ENCODE measurements at regions of chr2 and their contacts with region 1.

Region 1: DNA sequence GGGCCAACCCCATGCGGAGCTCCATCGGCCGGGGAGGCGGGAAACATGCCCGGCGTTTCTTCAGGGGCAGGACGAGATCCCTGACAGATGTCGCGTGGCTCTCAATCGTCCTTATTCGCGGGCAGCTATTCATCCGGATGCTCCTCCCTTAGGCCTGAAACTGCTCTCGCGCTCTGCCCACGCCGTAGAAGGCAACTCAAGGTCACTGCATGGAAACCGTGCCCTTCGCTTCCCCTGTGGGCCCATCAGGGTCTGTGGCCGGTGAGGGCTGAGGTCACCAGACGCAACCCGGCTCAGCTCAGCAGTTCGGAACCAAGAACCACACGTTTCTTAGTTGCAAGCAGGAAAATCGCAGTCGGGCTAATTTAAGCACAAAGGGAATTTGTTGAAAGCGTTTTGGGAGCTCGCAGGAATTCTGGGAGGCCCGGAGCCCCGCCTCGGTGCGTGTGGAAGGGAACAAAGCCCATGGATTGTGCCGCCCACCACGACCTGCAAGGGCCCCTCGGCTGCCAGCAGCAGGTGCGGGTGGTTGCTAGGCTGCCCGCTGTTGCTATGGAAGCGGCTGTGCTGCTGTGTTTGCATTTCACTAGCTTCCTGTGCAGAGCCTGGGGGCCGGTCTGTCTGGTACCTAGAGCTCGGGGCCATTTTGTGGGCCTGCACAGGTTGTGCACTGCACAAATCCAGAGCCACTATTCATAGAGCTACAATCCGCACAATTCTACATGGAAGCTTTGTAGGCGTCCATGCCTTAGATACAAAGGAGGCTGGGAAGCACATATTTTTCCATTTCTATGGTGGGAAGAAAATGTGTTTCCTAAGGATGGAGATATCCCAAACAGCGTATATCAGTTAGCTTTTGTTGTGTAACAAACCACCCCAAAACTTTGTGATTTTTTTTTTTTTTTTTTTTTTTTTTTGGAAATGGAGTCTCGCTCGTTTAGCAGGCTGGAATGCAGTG is 6.0 kb upstream of the ALLC start:
- DNase-seq: peak; percentile 56
- H3K4me3 Mint-ChIP-seq: peak overlapping the region; percentile 90
- H3K27ac Mint-ChIP-seq: peak overlapping the region; percentile 96
- H3K4me1 Mint-ChIP-seq: peaks cover 18% of the 10 kb centered on the region
- H3K27me3 Mint-ChIP-seq: peaks cover 2% of the 10 kb centered on the region

Region 2: DNA sequence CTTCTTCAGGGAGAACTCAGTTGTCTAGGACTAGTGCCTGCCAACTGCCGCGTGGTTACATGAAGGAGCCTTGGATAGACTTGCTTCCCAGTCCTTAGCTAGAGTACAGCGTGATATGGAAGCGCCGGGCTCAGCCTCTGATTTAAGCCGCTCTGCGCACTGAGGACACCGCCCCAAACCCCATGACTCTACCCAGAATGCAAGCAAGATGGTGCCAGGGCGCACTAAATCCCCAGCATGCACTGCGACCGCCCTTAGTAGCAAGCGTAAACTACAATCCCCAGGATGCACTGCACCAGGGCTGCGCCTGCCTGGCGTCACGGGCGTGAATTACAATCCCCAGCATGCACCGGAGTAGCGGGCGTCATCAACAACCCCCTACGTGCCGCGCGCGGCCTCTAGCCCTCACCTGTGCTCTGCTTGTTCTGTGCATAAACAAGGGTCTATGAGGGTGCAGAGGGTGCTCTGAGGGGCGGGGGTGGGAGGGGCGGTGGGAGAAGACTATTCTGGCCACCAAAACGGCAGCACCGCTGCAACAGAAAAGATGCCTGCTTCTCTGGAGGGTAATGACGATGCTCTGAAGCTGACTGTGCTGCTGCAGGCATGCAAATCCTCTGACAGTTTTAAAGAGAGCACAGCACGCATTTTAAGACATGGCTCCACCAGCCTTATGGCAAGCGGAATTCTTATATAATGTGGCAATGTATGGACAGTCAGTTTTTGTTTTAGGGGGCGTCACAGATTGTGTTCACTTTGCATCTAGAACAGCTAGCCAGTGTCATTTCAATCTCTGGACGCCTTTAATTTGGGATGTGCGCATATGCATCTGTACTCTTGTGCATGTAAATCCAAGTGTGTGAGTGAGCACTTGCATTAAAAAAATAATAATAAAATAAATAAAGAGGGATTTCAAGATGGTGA is 1038.4 kb before region 1 on chr2:
- intact Hi-C with region 1: loop called (anchors 2 kb)
- DNase-seq: peak; percentile 86
- H3K4me3 Mint-ChIP-seq: peak overlapping the region; percentile 80
- H3K27ac Mint-ChIP-seq: peak overlapping the region; percentile 81
- H3K4me1 Mint-ChIP-seq: peaks cover 5% of the 10 kb centered on the region
- H3K27me3 Mint-ChIP-seq: peaks cover 6% of the 10 kb centered on the region

Region 3: GRCh38 chr2:3009005-3009404 is 643.0 kb before region 1 on chr2:
- intact Hi-C with region 1: no loop called
- DNase-seq: no peak
- H3K4me3 Mint-ChIP-seq: no peak overlapping the region
- H3K27ac Mint-ChIP-seq: no peak overlapping the region
- H3K4me1 Mint-ChIP-seq: no peaks in the 10 kb centered on the region
- H3K27me3 Mint-ChIP-seq: peaks cover 7% of the 10 kb centered on the region

Region 4: GRCh38 chr2:3303583-3304406 is 348.2 kb before region 1 on chr2:
- intact Hi-C with region 1: loop called (anchors 1 kb)
- DNase-seq: peak; percentile 67
- H3K4me3 Mint-ChIP-seq: no peak overlapping the region
- H3K27ac Mint-ChIP-seq: peak overlapping the region; percentile 12
- H3K4me1 Mint-ChIP-seq: peaks cover 14% of the 10 kb centered on the region
- H3K27me3 Mint-ChIP-seq: no peaks in the 10 kb centered on the region

Region 5: DNA sequence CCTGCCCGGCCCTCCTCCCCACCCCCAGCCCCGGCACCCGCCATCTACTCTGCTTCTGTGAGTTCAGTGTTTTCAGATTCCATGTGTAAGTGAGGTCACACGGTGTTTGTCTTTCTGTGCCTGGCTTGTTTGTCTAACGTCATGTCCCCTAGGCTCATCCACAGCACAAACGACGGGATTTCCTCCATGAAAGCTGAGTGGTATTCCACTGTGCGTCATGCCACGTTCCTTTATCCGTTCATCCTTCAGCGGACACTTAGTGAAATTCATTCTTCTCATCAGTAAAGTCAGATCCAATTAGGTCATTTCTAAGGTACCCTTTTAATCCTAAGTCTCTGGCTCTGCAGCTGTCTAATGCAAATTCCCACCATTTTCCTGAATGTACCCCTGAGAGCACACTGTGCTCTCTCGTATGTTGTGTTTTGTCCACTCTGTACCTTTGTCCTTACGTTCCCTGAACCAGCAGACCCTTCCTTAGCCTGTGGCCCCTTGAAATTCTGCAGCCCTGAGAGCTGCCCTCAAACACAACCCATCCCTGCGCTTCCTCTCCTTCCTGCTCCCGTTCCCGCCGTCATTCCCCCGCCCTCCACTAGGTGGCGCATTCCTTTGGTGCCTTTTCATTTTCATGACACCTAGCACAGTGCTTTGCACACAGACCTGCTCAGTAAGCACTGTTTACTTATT is 228.3 kb before region 1 on chr2:
- intact Hi-C with region 1: loop called (anchors 1 kb)
- DNase-seq: peak; percentile 54
- H3K4me3 Mint-ChIP-seq: no peak overlapping the region
- H3K27ac Mint-ChIP-seq: peak overlapping the region; percentile 25
- H3K4me1 Mint-ChIP-seq: no peaks in the 10 kb centered on the region
- H3K27me3 Mint-ChIP-seq: no peaks in the 10 kb centered on the region

Region 6: GRCh38 chr2:3518496-3519254 is 133.3 kb before region 1 on chr2:
- intact Hi-C with region 1: loop called (anchors 1 kb)
- DNase-seq: peak; percentile 97
- H3K4me3 Mint-ChIP-seq: peak overlapping the region; percentile 94
- H3K27ac Mint-ChIP-seq: peak overlapping the region; percentile 91
- H3K4me1 Mint-ChIP-seq: peaks cover 50% of the 10 kb centered on the region
- H3K27me3 Mint-ChIP-seq: peaks cover 3% of the 10 kb centered on the region

Region 7: DNA sequence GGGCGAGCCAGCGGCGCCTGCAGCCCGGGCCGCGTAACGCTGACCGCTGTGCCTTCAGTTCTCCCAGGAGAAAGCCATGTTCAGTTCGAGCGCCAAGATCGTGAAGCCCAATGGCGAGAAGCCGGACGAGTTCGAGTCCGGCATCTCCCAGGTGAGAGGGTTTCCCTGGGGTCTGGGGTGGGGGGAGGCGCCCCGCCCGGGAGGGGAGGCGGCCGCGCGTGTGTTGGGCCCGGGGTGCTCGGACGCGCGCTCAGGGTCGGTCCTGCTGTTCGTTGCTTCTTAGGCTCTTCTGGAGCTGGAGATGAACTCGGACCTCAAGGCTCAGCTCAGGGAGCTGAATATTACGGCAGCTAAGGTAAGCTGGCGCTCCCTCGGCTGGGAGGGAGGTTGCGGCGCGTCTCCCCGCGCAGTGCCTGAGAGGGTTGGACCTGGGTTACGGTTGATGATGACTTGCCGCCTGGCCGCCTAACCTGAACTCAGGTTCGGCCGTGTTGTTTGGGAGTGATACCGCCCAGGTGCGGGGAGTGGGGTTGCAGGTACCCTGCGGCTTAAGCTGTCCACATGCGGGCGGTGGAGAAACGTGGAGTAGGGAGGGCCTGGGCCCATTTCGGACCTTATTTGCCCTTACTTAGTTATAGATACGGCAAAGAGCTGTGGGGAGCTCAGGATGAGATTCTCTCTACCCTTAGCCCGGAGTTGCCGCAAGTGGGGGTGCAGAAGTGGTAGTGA is 76.3 kb before region 1 on chr2:
- intact Hi-C with region 1: loop called (anchors 1 kb)
- DNase-seq: peak; percentile 17
- H3K4me3 Mint-ChIP-seq: peak overlapping the region; percentile 99
- H3K27ac Mint-ChIP-seq: peak overlapping the region; percentile 91
- H3K4me1 Mint-ChIP-seq: peaks cover 54% of the 10 kb centered on the region
- H3K27me3 Mint-ChIP-seq: peaks cover 1% of the 10 kb centered on the region